Left cardiac atrium (tissue), 4 donors: ENCODE measurements at regions of chr10 and their contacts with region 1.

Region 1: DNA sequence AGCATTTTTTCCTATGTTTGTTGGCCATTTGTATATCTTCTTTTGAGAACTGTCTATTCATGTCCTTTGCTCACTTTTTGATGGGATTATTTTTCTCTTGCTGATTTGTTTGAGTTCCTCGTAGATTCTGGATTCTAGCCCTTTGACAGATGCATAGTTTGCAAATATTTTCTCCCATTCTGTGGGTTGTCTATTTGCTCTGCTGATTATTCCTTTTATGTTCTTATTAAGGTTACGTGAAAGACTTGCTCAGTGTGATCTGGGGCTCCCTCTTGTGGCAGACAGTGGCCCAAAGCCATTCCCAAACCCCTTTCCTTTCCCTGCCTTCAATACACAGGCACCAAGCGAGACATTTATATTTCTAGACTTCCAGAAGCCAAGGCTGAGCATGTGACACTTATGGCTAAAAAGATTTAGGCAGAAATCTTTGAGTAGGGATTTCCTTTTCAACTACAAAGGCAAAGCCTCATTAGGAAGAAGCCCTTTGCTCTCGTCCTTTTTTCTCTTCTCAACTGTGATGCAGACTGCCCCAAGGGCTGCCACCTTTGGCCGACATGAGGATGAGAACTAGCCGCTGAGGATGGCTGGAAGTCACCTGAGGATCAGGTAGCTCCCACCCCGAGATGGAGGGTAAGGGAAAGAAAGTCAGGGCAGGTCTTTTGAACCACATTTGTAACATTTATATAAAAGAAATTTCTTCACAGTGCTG is 23.6 kb downstream of the ST8SIA6 start:
- DNase-seq: peak; percentile 78
- ATAC-seq: peak; percentile 63 to 77

Region 2: GRCh38 chr10:16828114-16828568 is 602.7 kb before region 1 on chr10:
- intact Hi-C with region 1: loop called in 1 of 2 experiments (anchors 5 kb)
- DNase-seq: peak; percentile 47
- ATAC-seq: peak; percentile 85 to 87

Region 3: GRCh38 chr10:16843252-16843870 is 587.4 kb before region 1 on chr10:
- intact Hi-C with region 1: loop called in 1 of 2 experiments (anchors 10 kb)
- DNase-seq: no peak
- ATAC-seq: peak; percentile 72 to 73

Region 4: GRCh38 chr10:17265468-17265867 is 165.3 kb before region 1 on chr10:
- intact Hi-C with region 1: loop called in 1 of 2 experiments (anchors 10 kb)
- DNase-seq: no peak
- ATAC-seq: no peak

Region 5: DNA sequence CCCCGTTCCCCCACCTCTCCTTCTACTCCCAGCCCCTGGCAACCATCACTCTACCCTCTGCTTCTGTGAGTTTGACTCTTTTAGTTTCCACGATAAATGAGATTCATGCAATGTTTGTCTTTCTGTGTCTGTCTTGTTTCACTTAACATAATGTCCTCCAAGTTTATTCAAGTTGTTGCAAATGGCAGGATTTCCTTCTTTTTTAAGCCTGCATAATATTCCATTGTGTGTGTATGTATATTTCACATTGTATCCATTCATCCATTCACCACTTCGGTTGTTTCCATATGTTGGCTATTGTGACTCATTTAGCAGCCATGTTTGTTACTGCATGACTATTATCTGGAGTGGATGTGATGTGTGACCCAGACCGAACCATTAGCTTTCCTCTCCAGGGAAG is 138.4 kb before region 1 on chr10:
- intact Hi-C with region 1: no loop called
- DNase-seq: no peak
- ATAC-seq: no peak